ENCODE measurements at regions of chr12 and their contacts with region 1.

Region 1: DNA sequence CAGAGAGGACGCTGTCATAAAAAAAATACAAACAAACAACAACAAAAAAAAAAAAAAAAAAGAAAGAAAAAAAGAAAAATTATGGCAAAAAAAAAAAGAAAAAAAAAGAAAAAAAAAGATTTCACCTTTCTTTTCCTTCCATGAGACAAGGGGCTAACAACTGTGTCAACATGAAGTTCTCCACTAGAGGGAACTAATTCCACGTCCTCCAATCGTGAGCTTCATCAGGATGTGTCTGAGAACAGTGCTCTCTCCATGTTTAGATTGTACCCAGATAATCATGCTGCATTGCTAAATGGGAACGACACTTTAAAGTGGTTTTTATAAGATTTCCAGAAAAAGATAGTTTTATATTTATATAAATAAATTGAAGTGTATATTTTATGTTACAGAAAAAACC is 96.2 kb upstream of the PTPRB start:
- DNase-seq: no peak
- H3K4me3 ChIP-seq: no peak overlapping the region
- CTCF ChIP-seq: peak; percentile 62

Region 2: GRCh38 chr12:69779928-69780327 is 953.5 kb before region 1 on chr12:
- CTCF ChIA-PET with region 1: interaction called, 10 read pairs
- POLR2A ChIA-PET with region 1: no interaction called
- DNase-seq: no peak
- H3K4me3 ChIP-seq: no peak overlapping the region
- CTCF ChIP-seq: peak; percentile 33

Region 3: GRCh38 chr12:70590051-70590450 is 143.3 kb before region 1 on chr12:
- CTCF ChIA-PET with region 1: interaction called, 199 read pairs
- POLR2A ChIA-PET with region 1: no interaction called
- DNase-seq: peak; percentile 28
- H3K4me3 ChIP-seq: no peak overlapping the region
- CTCF ChIP-seq: peak; percentile 80

Region 4: GRCh38 chr12:70719672-70720420 is 13.5 kb before region 1 on chr12:
- CTCF ChIA-PET with region 1: interaction called, 14 read pairs
- POLR2A ChIA-PET with region 1: no interaction called
- DNase-seq: peak; percentile 7
- H3K4me3 ChIP-seq: peak overlapping the region; percentile 58
- CTCF ChIP-seq: peak; percentile 85

Region 5: DNA sequence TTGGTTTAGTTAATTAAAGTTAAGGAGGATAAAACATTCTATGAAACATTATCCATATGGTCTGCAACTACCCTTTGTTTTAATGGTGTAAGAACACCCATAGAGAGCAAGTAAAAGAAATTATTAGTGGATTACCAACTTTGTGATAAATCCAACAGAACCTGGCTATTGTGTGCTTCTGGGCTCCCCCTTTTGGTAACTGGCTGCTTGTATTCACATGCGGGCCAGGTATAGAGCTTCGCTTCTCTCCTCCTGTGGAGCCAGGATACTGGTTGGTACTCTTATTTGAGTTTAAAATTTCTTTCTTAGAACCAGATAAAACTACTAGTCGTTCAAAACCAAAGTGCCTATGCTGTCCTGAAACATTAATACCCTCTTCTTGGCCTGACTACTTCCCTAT is 106.2 kb after region 1 on chr12:
- CTCF ChIA-PET with region 1: interaction called, 29 read pairs
- POLR2A ChIA-PET with region 1: no interaction called
- DNase-seq: no peak
- H3K4me3 ChIP-seq: no peak overlapping the region
- CTCF ChIP-seq: no peak

Region 6: GRCh38 chr12:71007781-71008404 is 274.5 kb after region 1 on chr12:
- CTCF ChIA-PET with region 1: interaction called, 86 read pairs
- POLR2A ChIA-PET with region 1: no interaction called
- DNase-seq: no peak
- H3K4me3 ChIP-seq: no peak overlapping the region
- CTCF ChIP-seq: no peak

Region 7: DNA sequence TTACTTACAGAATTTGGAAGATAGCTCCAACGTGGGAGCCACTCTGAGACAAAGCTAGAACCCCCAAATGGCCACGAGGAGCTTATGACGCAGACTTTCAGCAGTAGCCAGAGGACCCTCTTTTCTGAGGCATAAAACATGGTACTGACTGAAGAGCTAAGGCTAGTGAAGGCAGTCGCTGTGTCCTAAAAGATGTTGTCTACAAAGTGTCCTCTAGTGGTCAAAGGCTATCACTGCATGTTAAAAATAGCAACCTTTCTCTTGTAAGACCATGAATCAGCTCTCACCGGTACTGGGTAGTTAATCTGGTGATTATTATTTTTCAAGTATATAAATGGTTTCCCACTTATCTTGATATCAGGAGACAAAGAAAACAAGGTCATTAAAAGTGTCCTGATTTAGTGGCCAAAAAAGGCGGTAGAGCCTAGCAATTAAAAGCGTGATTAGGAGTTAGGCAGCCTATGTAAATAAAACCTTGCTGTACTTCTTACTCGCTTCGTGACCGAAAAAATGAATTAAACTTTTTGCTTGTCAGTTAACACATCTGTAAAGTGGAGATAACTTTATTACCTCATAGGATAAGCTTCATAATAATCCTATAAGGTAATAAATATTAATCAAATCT is 659.2 kb after region 1 on chr12:
- CTCF ChIA-PET with region 1: interaction called, 13 read pairs
- POLR2A ChIA-PET with region 1: no interaction called
- DNase-seq: peak; percentile 50
- H3K4me3 ChIP-seq: no peak overlapping the region
- CTCF ChIP-seq: peak; percentile 81

Measured in AG04449 (cell line).